Right ventricle myocardium inferior (tissue), 1 donor: ENCODE measurements at regions of chr2 and their contacts with region 1.

Region 1: GRCh38 chr2:69177785-69178636 is 165.0 kb downstream of the ANTXR1 start:
- DNase-seq: peak; percentile 97
- ATAC-seq: peak; percentile 88

Region 2: GRCh38 chr2:69012310-69013141 is 165.5 kb before region 1 on chr2:
- intact Hi-C with region 1: loop called (anchors 10 kb)
- DNase-seq: peak; percentile 77
- ATAC-seq: peak; percentile 72